ENCODE measurements at regions of chr11 and their contacts with region 1.

Region 1: GRCh38 chr11:128157423-128158298 is 429.7 kb downstream of the ETS1 start:
- DNase-seq: peak; percentile 39
- H3K4me3 Mint-ChIP-seq: no peak overlapping the region
- H3K27ac Mint-ChIP-seq: peak overlapping the region; percentile 81
- H3K4me1 Mint-ChIP-seq: peaks cover 26% of the 10 kb centered on the region
- H3K27me3 Mint-ChIP-seq: no peaks in the 10 kb centered on the region

Region 2: GRCh38 chr11:128026596-128026995 is 131.1 kb before region 1 on chr11:
- intact Hi-C with region 1: loop called (anchors 1 kb)
- DNase-seq: no peak
- H3K4me3 Mint-ChIP-seq: no peak overlapping the region
- H3K27ac Mint-ChIP-seq: no peak overlapping the region
- H3K4me1 Mint-ChIP-seq: peaks cover 11% of the 10 kb centered on the region
- H3K27me3 Mint-ChIP-seq: peaks cover 46% of the 10 kb centered on the region

Region 3: DNA sequence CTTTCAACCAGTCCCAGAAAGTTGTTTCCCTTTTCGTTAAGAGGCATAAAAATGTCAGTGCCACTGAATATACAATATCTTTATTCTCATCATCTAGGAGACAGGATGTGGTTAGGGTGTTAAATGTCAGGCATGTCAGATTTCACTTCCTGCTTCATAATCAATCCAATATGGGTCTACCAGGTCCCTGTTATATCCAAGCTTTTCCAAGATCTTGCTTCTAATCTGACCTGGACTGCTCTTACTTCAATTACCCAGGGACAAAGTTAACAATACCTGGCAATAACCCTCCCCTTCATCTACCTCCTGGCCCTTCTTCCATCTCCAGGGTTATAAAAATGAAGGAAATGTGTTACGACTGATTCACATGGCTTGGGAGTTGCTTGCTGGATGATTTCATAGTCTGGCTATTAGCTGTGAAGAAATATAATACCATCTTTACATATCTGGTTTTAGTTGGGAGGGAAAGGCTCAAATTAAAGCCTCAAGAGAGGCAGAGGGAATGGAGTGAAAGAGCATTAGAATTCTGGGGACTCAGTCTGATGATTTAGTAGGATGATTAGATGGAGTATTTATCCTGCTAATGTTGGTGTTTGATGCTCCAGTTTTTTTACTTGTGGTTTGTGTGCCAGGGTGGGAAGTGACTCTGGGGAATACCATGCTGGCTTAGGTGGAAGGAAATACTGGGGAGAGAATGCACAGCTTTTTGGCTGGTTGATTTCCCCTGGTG is 104.6 kb before region 1 on chr11:
- intact Hi-C with region 1: loop called (anchors 5 kb)
- DNase-seq: no peak
- H3K4me3 Mint-ChIP-seq: peak overlapping the region; percentile 48
- H3K27ac Mint-ChIP-seq: peak overlapping the region; percentile 76
- H3K4me1 Mint-ChIP-seq: peaks cover 56% of the 10 kb centered on the region
- H3K27me3 Mint-ChIP-seq: no peaks in the 10 kb centered on the region

Region 4: DNA sequence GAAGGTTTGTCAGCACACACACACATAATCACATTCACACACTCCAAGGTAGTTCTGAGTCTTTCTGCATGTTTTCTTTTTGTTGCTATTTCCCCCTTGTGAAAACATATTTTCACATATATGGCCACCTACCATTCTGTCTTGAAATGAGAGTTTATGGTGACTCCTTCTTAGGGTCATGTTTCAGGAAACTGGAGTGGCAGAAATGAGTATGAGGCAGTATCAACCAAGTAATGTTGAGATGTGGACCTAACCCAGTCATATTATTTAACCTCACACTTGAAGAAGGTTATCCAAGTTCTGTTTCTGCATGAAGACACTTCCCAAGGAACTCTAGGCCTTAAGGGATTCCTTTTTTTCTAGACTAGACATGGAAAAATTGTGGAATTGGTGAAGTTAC is 51.7 kb before region 1 on chr11:
- intact Hi-C with region 1: loop called (anchors 10 kb)
- DNase-seq: no peak
- H3K4me3 Mint-ChIP-seq: no peak overlapping the region
- H3K27ac Mint-ChIP-seq: no peak overlapping the region
- H3K4me1 Mint-ChIP-seq: peaks cover 12% of the 10 kb centered on the region
- H3K27me3 Mint-ChIP-seq: peaks cover 1% of the 10 kb centered on the region

Region 5: GRCh38 chr11:128180446-128181087 is 22.9 kb after region 1 on chr11:
- intact Hi-C with region 1: loop called (anchors 1 kb)
- DNase-seq: no peak
- H3K4me3 Mint-ChIP-seq: no peak overlapping the region
- H3K27ac Mint-ChIP-seq: peak overlapping the region; percentile 44
- H3K4me1 Mint-ChIP-seq: peaks cover 61% of the 10 kb centered on the region
- H3K27me3 Mint-ChIP-seq: no peaks in the 10 kb centered on the region

Region 6: DNA sequence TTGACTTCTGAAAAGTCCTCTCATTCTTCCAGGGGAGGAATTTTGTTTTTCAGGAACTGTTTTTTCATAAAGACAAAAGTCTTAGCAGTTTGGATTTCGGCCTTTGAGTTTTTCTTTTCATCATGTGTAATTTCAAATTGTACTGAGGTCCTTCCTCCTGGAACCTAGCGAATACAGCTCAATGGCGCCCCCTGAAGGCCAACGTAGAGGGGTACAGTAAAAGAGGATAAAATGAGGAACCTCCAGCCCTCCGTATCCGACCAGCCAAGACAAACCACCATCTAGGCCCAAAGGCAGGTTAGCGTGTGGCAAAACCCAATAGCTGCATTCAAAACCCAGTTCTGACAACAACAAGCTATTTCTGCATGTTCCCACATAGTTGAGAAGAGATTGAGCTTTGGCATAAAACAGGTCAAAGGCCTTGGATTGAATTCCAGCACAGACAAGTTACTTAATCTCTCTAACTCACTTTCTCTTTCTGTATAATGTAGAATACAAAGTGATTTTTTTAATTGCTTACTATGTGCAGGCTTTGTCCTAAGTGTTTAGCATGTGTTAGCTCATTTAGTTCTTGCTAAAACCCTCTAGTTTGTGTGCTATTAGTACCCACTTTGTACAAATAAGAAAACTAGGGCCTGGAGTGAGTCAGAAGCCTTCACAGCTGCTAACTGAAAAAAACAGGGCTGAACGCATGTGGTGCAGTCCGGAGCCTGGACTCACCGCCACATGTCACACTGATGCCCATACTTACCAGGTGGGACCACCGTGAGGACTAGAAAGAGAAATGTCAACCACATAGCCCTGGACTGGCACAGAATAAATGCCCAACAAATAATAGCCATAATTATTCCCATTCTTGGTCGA is 472.9 kb after region 1 on chr11:
- intact Hi-C with region 1: loop called (anchors 1 kb)
- DNase-seq: peak; percentile 81
- H3K4me3 Mint-ChIP-seq: peak overlapping the region; percentile 28
- H3K27ac Mint-ChIP-seq: peak overlapping the region; percentile 97
- H3K4me1 Mint-ChIP-seq: peaks cover 59% of the 10 kb centered on the region
- H3K27me3 Mint-ChIP-seq: no peaks in the 10 kb centered on the region

Region 7: GRCh38 chr11:128831174-128832120 is 673.8 kb after region 1 on chr11:
- intact Hi-C with region 1: loop called (anchors 2 kb)
- DNase-seq: peak; percentile 75
- H3K4me3 Mint-ChIP-seq: peak overlapping the region; percentile 6
- H3K27ac Mint-ChIP-seq: peak overlapping the region; percentile 86
- H3K4me1 Mint-ChIP-seq: peaks cover 18% of the 10 kb centered on the region
- H3K27me3 Mint-ChIP-seq: peaks cover 5% of the 10 kb centered on the region